Right ventricle myocardium inferior (tissue), 1 donor: ENCODE measurements at regions of chr19 and their contacts with region 1.

Region 1: GRCh38 chr19:29665215-29665825 is at the start of gene PLEKHF1:
- DNase-seq: peak; percentile 94
- ATAC-seq: peak; percentile 86
- total RNA-seq, gene PLEKHF1: 43.6 TPM

Region 2: DNA sequence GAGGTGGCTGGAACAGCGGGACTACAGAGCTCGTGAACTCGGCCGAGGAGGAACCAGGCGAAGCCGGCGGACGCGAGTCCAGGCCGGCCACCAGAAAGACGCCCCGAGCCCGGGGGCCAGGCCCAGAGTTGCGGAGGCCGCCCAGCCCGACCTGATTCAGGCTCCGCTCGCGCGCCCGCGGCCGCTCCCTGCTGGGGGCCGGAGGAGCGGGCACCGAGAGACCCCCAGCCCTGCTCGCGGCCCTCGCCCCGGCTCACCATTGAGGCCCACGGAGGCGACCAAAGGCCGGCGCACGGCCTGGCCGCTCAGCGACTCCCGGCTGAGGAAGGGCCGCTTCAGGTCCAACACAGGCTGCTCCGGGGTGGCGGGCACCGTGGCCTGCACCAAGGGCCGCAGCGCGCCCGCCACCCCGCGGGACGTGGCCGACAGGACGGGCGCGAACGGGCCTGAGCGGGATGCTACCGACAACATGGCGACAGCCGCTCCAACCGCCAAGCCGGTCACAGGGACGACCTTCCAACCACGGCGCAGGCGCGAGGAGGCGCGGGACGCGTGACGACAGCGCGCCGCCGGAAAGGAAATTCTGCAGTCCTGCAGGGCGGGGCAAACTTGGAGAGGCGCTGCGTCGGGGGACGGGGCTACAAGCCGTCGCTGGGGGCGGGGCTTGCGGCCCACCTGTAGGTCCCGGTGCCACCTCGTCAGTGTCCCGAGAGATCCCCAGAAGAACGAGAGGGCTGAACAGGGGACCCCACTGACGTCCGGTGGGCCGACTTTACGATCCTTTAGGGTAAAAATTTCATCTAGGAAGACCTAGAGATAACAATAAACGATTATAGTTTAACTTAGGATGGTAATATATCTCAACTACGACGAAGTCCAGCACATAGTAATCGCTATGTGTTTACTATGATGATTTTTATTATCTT is 452.4 kb before region 1 on chr19 and contains the start of gene UQCRFS1:
- intact Hi-C with region 1: loop called (anchors 10 kb)
- DNase-seq: peak; percentile 97
- ATAC-seq: peak; percentile 99
- total RNA-seq, gene UQCRFS1: 168 TPM

Region 3: DNA sequence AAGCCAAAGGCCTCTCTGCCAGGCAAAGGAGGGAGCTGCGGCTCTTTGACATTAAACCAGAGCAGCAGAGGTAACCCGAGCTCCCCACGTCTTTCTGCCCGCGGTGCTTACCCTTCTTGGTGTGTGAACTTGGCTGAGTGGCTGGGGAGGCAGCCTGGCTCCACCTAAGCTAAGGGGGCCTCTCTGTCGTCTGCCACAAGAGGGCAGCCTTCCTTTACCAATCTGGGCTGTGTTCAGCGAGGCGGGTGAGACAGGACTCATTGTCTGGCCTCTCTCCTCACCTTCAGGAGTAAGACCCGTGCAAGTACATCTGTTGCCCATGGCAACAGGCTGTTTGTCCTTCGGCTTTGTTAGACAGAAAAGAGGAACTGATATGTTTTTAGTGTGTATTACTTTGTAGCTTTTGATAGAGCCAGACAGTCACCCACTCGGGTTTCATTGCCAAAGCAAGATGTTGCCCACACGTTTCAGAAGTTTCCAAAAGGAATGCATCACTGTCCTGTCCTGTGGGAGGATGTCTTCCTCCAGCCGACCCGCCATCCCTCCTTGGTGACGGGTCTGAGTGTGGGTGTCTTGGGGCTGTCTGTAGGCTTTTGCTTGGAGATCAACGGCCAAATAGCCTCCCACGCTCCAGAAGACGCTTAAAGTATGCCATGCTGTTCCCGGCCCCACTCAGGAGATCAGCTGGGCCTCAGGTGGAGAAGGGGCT is 54.6 kb before region 1 on chr19:
- intact Hi-C with region 1: loop called (anchors 2 kb)
- DNase-seq: peak; percentile 78
- ATAC-seq: peak; percentile 84

Region 4: GRCh38 chr19:29681422-29682235 is 16.3 kb after region 1 on chr19:
- intact Hi-C with region 1: loop called (anchors 2 kb)
- DNase-seq: no peak
- ATAC-seq: peak; percentile 8

Region 5: DNA sequence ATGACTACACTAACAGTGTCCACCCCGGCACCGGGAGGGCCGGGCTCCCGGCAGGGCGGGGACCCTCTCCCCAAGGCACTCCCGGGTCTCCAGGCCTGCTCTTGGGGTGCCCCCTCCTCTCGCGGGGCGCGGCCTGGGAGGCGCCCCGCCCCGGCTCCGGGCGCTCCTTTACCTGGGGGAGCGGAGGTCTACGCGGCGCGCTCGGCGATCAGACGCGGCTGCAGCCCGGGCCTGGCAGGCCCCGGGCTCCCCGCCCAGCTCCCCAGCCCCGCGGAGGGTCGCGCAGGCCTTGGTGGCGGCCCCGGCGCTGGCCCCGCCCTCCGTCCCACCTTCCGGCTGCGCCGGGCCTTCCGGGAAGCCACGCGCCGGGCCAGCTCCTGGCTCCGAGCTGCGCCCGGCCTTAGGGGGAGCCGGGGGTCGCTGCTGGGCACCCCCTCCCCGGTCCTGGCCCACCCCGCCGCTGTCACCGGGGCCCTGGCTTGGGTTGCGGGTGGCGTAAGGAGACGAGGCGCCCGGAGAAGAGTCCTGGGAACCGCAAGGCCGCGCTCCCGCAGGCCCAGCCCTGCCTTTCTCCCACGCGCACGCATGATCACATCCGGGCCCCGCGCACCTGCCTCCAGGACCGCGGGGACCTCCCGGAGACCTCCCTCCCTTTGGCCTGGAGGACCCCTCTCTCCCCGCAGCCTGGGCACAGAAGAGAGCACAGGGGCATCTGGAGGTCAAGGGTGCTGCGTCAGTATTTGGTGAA is 49.8 kb after region 1 on chr19 and contains the start of gene C19orf12:
- intact Hi-C with region 1: loop called (anchors 2 kb)
- DNase-seq: peak; percentile 80
- ATAC-seq: peak; percentile 82
- total RNA-seq, gene C19orf12: 64.2 TPM